CD4-positive, alpha-beta memory T cell (primary cell): ENCODE measurements at regions of chr13 and their contacts with region 1.

Region 1: DNA sequence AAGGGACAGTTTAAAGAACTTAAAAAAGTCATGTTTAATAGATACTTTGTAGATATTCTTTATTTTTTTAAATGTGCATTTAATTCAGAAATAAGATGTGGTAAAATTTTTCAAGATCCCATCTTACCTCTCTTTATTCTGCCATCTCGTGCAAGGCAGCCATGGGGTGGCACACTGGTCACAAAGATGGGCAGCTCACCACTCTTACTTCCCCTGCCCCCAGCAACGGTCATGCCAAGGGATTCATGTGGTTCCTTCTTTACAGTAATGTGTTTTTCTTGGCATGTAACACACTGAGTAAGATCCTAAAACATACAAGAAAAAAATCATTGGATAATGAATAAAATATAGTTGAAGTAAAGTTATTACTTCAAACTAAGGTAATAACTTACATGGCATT is 64.2 kb downstream of the LNX2 start:
- DNase-seq: no peak
- H3K4me3 ChIP-seq: no peak overlapping the region
- H3K4me3 Mint-ChIP-seq: no peak overlapping the region
- H3K27ac ChIP-seq: no peak overlapping the region
- H3K27ac Mint-ChIP-seq: no peak overlapping the region
- H3K4me1 ChIP-seq: peaks cover 11% of the 10 kb centered on the region
- H3K4me1 Mint-ChIP-seq: peaks cover 6 to 14% (median 11%) of the 10 kb centered on the region in 4 donors
- H3K27me3 ChIP-seq: no peaks in the 10 kb centered on the region
- H3K27me3 Mint-ChIP-seq: no peaks in the 10 kb centered on the region

Region 2: GRCh38 chr13:27599845-27600553 is 43.9 kb after region 1 on chr13:
- CTCF ChIA-PET with region 1: no interaction called
- POLR2A ChIA-PET with region 1: no interaction called
- intact Hi-C with region 1: loop called (anchors 5 kb)
- DNase-seq: no peak
- H3K4me3 ChIP-seq: no peak overlapping the region
- H3K4me3 Mint-ChIP-seq: no peak overlapping the region
- H3K27ac ChIP-seq: no peak overlapping the region
- H3K27ac Mint-ChIP-seq: no peak overlapping the region
- H3K4me1 ChIP-seq: peaks cover 23% of the 10 kb centered on the region
- H3K4me1 Mint-ChIP-seq: peaks cover 16 to 23% (median 18%) of the 10 kb centered on the region in 4 donors
- H3K27me3 ChIP-seq: no peaks in the 10 kb centered on the region
- H3K27me3 Mint-ChIP-seq: no peaks in the 10 kb centered on the region